ENCODE measurements at regions of chr22 and their contacts with region 1.

Region 1: DNA sequence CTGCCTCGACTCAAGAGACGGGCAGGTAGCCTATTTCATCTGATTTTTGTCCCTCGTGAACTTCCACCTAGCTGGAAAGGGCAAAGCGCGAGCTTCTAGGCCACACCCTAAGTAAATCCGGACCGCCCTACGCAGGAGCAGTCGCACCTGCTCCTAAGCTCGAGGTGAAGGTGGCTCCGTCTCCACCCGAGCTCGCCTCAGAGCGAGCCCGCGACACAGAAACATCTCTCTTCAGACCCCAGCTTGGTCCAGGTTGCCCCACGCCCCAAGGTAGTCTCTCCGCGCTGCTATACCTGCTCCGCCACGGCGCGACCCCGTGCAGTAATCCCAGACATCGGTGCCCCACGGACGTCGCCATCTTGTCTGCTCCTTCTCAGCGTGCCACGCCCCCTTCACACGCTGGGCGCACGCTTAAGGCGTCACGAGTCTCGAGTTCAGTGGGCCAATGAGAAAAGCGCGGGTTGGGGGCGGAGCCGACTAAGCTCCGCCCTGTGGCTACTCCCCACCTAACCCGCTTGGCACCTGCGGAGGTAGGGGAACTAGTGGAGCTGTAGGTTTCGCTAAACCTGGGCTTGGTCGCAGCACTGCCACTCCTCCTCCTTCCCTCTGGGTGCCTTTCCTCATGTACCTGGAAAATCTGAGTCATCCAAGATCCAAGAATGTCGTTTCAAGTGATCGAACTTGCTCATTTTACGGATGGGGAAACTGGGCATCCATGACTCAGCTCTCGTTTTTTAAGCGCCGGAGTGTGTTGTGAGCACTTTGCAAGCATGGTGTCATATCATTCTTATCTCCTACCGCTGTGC is at the start of gene PISD:
- DNase-seq: peak; percentile 97
- ATAC-seq: peak; percentile 93
- H3K4me3 Mint-ChIP-seq: peak within 1 kb of the TSS; percentile 90
- H3K27ac Mint-ChIP-seq: peak within 1 kb of the TSS; percentile 92
- H3K4me1 Mint-ChIP-seq: peaks cover 29% of the 10 kb centered on the region
- H3K27me3 Mint-ChIP-seq: no peaks in the 10 kb centered on the region
- total RNA-seq, gene PISD: 28.8 to 29.2 TPM

Region 2: DNA sequence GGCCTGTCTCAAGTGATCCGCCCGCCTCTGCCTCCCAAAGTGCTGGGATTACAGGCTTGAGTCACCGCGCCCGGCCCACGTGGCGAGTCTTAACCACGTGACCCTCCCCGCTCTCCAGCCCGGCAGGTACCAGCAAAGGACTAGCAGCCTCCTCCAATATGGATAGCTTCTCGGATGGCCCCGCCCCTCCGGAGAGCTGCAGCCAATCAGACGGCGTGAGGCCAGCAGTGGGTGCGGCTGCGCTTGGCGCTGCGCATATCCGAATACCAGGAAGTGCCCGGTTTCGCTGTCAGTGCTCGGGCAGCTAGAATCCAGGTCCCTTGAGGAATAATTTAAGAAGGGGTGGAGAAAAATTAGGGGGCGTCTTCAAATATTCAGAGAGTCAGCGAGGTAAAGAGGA is 14.6 kb after region 1 on chr22:
- CTCF ChIA-PET with region 1: interaction called, 67 read pairs
- POLR2A ChIA-PET with region 1: interaction called, 14 read pairs
- DNase-seq: peak; percentile 93
- ATAC-seq: peak; percentile 100
- H3K4me3 Mint-ChIP-seq: peak overlapping the region; percentile 82
- H3K27ac Mint-ChIP-seq: peak overlapping the region; percentile 88
- H3K4me1 Mint-ChIP-seq: peaks cover 19% of the 10 kb centered on the region
- H3K27me3 Mint-ChIP-seq: no peaks in the 10 kb centered on the region

Region 3: GRCh38 chr22:31749636-31750364 is 87.7 kb after region 1 on chr22 and contains the start of gene PRR14L:
- CTCF ChIA-PET with region 1: interaction called, 11 read pairs
- POLR2A ChIA-PET with region 1: interaction called, 16 read pairs
- DNase-seq: peak; percentile 99
- ATAC-seq: peak; percentile 73
- H3K4me3 Mint-ChIP-seq: peak within 1 kb of the TSS; percentile 90
- H3K27ac Mint-ChIP-seq: peak within 1 kb of the TSS; percentile 96
- H3K4me1 Mint-ChIP-seq: peaks cover 52% of the 10 kb centered on the region
- H3K27me3 Mint-ChIP-seq: no peaks in the 10 kb centered on the region
- total RNA-seq, gene PRR14L: 64.0 to 65.3 TPM

Region 4: GRCh38 chr22:31952459-31952858 is 290.4 kb after region 1 on chr22:
- CTCF ChIA-PET with region 1: interaction called, 89 read pairs
- POLR2A ChIA-PET with region 1: interaction called, 6 read pairs
- DNase-seq: no peak
- ATAC-seq: no peak
- H3K4me3 Mint-ChIP-seq: no peak overlapping the region
- H3K27ac Mint-ChIP-seq: no peak overlapping the region
- H3K4me1 Mint-ChIP-seq: peaks cover 76% of the 10 kb centered on the region
- H3K27me3 Mint-ChIP-seq: no peaks in the 10 kb centered on the region

Measured in activated CD8-positive, alpha-beta T cell treated with anti-CD3 and anti-CD28 coated beads, Interleukin-2, amount 10 ng/mL, durations not matched to agents 7 days and 5 days (primary cell).